GM13977 (cell line): ENCODE measurements at regions of chr20 and their contacts with region 1.

Region 1: DNA sequence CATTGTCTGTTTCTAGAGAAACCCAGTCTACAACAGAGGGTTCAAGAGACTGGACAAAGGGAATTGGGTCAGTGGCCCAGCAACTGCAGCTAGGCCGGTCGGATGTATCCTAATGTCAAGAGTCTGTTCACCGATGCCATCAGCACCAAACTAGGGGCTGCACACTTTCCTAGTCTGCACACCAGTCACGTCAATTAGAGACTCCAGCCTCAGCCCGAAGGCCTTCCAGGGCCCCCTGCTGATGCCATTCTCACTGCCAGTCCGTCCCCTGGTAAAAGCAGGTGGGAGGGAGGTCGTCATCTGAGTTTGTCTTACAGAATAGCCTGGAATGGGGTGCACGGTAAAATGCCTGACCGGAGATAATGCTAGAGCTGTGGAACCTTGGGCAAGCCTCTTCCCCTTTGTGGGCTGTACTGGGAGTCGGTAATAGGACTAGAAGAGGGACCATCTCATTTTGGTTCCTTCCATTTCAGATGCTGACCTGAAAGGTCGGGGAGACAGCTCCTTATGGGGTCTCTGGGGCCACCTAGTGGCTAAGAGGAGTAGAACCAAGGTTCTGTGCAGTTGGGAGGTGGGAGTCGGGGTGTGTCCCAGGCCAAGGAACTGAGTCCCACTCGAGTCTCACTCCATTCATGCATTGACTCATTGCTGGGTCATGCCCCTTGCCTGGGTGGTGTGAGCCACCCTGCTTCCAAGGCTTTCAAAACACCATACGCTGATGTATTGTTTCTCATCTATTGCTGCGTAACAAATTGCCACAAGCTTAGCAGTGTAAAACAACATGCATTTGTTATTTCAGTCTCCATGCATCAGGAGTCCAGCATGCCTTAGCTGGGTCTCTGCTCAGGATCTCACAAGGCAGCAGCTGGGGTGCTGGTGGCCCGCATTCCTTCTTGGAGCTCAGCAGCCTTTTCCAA is 5.1 kb downstream of the SOX12 start:
- DNase-seq: peak; percentile 83
- CTCF ChIP-seq: peak; percentile 81

Region 2: DNA sequence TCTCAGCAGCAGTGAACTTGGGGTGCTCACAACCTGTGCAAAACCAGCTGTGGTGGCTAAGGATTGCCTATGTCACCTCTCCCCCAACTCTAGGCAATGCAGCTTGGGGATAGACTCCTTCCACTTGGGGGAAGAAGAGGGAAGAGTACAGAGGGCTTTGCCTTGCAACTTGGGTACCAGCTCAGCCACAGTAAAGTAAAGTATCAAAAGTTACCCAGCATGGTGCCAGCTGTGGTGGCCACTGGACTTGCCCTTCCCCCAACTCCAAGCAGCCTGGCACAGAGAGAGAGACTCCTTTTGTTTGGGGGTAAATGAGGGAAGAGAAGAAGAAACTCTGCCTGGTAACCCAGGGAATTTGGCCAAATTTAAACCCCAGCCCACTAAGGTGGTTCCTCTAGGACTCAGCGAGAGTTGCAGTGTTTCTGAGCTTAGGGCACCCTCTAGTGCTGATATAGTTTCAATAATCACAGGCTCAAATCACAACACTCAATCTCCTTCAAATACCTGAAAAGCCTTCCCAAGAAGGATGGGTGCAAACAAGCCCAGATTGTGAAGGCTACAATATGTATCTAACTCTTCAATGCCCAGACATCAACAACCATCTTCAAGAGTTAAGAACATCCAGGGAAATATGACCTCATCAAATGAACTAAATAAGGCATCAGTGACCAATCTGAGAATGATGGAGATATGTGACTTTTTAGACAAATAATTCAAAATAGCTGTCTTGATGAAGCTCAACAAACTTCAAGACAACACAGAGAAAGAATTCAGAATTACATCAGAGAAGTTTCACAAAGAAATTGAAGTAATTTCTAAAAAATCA is 111.0 kb before region 1 on chr20:
- in situ Hi-C with region 1: loop called (anchors 10 kb)
- DNase-seq: peak; percentile 17
- CTCF ChIP-seq: peak; percentile 49

Region 3: GRCh38 chr20:381581-382290 is 51.2 kb after region 1 on chr20:
- in situ Hi-C with region 1: no loop called
- DNase-seq: peak; percentile 91
- CTCF ChIP-seq: no peak

Region 4: GRCh38 chr20:454946-455345 is 124.5 kb after region 1 on chr20:
- in situ Hi-C with region 1: no loop called
- DNase-seq: no peak
- CTCF ChIP-seq: no peak